Activated naive CD8-positive, alpha-beta T cell treated with anti-CD3 and anti-CD28 coated beads, Interleukin-2, amount 10 ng/mL, durations not matched to agents 7 days and 5 days (primary cell): ENCODE measurements at regions of chr1 and their contacts with region 1.

Region 1: DNA sequence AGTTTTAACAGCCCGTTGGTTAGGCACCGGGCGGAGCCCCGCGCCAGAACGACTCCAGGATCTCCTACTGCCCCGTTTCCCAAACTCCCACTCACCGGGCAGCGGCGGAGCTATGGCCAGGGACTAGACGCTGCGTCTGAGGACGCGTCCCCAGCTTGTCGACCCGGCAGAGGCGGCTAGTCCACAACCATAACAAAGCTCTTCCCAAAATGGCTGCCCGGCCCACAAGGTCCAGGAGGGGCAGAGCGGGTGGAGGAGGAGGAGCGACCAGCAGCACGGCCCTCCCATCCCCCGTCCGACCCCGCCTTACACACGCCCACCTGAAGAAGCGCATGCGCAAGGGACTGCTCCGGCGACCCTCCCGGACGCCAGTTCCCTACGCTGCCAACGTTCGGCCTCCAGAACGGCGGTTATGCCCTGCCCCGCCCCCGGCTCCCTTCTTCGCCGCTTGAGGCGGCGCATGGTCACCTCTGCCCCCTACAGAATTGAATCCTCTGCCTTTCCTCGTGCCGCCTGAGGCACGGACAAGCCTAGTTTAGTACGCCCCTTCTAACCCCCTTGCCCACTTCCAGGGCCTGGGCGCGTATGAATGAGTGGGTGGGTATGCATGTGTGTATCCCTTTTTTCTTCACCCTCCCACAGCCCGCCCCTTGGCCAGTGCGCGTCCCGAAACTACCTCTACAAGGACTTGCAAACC is at the start of gene GPBP1L1:
- DNase-seq: peak; percentile 97
- ATAC-seq: peak; percentile 70
- H3K4me3 Mint-ChIP-seq: peak within 1 kb of the TSS; percentile 92
- H3K27ac Mint-ChIP-seq: peak within 1 kb of the TSS; percentile 99
- H3K4me1 Mint-ChIP-seq: peaks cover 20% of the 10 kb centered on the region
- H3K27me3 Mint-ChIP-seq: no peaks in the 10 kb centered on the region
- total RNA-seq, gene GPBP1L1: 134 to 138 TPM

Region 2: DNA sequence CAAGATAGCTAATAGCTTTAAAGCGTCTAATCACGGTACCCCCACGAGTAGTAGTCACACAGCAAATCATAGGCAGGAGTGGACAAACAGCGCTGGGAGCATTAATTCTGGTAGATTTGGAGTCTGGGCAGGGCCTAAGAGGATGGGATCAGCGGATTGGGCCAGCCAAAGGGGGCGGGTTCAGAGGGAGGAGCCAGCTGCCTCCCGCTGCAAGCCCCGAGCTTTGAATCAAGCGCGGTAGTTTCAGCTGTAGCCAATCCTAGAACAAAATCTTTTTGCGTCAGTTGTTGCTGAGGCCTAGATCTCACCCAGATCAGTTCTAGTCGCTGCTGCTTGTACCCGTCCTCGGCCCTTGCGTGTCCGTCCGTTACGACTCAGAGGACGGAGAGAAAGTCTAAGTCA is 103.2 kb before region 1 on chr1:
- POLR2A ChIA-PET with region 1: interaction called, 21 read pairs
- DNase-seq: peak; percentile 90
- ATAC-seq: peak; percentile 75
- H3K4me3 Mint-ChIP-seq: peak overlapping the region; percentile 93
- H3K27ac Mint-ChIP-seq: peak overlapping the region; percentile 100
- H3K4me1 Mint-ChIP-seq: peaks cover 23% of the 10 kb centered on the region
- H3K27me3 Mint-ChIP-seq: no peaks in the 10 kb centered on the region

Region 3: GRCh38 chr1:45750298-45751038 is 64.0 kb after region 1 on chr1 and contains the start of gene IPP:
- POLR2A ChIA-PET with region 1: interaction called, 10 read pairs
- DNase-seq: peak; percentile 94
- ATAC-seq: peak; percentile 98
- H3K4me3 Mint-ChIP-seq: peak within 1 kb of the TSS; percentile 96
- H3K27ac Mint-ChIP-seq: peak within 1 kb of the TSS; percentile 99
- H3K4me1 Mint-ChIP-seq: peaks cover 7% of the 10 kb centered on the region
- H3K27me3 Mint-ChIP-seq: no peaks in the 10 kb centered on the region
- total RNA-seq, gene IPP: 13.4 to 14.3 TPM

Region 4: GRCh38 chr1:45803301-45803780 is 116.9 kb after region 1 on chr1 and contains the start of gene MAST2:
- POLR2A ChIA-PET with region 1: interaction called, 21 read pairs
- DNase-seq: peak; percentile 94
- ATAC-seq: peak; percentile 92
- H3K4me3 Mint-ChIP-seq: peak within 1 kb of the TSS; percentile 97
- H3K27ac Mint-ChIP-seq: peak within 1 kb of the TSS; percentile 84
- H3K4me1 Mint-ChIP-seq: peaks cover 24% of the 10 kb centered on the region
- H3K27me3 Mint-ChIP-seq: peaks cover under 1% of the 10 kb centered on the region
- total RNA-seq, gene MAST2: 20.9 to 23.7 TPM